WTC11 (cell line): ENCODE measurements at regions of chr12 and their contacts with region 1.

Region 1: DNA sequence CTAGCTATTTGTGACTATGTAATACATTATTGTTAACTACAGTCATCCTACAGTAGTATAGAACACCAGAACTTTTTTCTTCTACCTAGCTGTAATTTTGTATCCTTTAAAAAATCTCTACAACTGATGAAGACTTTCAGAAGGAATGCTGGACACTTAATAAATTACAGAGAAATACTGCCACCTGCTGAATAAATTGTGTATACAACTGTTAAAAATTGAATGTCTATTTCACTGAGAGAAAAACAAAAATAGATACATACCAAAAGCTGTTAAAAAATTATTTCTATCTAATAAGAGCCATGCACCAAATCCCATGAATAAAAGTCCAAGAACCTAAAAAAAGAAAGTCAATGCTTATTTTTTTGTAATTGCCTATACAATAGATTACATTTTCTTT is 6.6 kb downstream of the TSPAN19 start:
- DNase-seq: no peak
- ATAC-seq: no peak
- H3K4me3 Mint-ChIP-seq: no peak overlapping the region
- H3K27ac Mint-ChIP-seq: no peak overlapping the region
- H3K4me1 Mint-ChIP-seq: no peaks in the 10 kb centered on the region
- H3K27me3 Mint-ChIP-seq: no peaks in the 10 kb centered on the region
- CTCF ChIP-seq: peak; percentile 53; the same call in 1 of the 2 replicates

Region 2: GRCh38 chr12:84637926-84638325 is 391.5 kb before region 1 on chr12:
- CTCF ChIA-PET with region 1: no interaction called
- POLR2A ChIA-PET with region 1: no interaction called
- DNase-seq: no peak
- ATAC-seq: no peak
- H3K4me3 Mint-ChIP-seq: no peak overlapping the region
- H3K27ac Mint-ChIP-seq: no peak overlapping the region
- H3K4me1 Mint-ChIP-seq: peaks cover 5% of the 10 kb centered on the region
- H3K27me3 Mint-ChIP-seq: no peaks in the 10 kb centered on the region
- CTCF ChIP-seq: no peak

Region 3: GRCh38 chr12:84874125-84874824 is 155.2 kb before region 1 on chr12:
- CTCF ChIA-PET with region 1: interaction called, 55 read pairs
- POLR2A ChIA-PET with region 1: no interaction called
- DNase-seq: no peak
- ATAC-seq: peak; percentile 74
- H3K4me3 Mint-ChIP-seq: no peak overlapping the region
- H3K27ac Mint-ChIP-seq: no peak overlapping the region
- H3K4me1 Mint-ChIP-seq: no peaks in the 10 kb centered on the region
- H3K27me3 Mint-ChIP-seq: no peaks in the 10 kb centered on the region
- CTCF ChIP-seq: peak; percentile 68

Region 4: DNA sequence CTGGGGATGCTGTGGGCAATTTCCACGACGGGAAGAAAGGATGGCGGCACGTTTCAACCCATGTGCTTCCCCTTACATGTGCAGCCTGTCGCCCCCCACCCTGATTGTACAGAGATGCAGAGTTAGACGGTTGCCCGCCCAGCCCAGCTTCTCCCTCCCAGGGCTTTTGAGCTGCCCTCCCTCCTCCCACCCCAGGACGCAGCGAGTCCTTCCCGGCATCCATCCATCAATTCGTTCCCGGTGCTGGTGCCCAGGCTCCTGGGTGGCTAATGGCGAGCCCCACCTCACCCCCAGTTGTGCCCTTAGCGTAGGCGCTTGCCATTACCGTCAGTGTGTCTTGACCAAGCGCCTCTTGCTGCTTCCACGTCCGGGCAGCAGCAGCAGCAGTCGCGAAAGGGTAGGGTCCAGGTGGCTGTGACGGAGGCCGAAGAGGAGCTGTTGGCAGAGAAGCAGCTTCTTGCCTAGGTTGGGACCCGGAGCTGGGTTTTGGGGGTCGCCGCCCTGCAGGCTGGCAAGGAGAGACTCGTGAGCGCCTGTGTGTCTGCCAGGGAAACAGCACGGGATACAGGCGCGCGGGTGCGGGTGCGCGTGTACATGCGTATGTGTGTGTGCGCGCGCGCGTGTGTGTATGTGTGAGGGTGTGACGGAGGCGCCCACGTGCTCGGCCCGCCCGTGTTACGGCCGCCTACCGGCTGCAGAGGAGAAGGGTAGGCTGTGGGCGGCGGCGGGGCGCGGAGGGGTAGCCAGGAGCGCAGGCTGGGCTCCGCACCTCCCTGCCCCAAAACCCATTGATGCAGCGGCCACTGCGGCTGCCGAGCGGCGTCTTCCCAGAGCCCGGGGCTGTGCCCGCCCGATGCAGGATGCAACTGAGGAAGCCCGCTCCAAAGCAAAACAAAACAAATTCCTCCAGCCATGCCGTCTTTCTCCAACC is 117.0 kb before region 1 on chr12 and contains the start of gene SLC6A15:
- CTCF ChIA-PET with region 1: interaction called, 30 read pairs
- POLR2A ChIA-PET with region 1: no interaction called
- DNase-seq: peak; percentile 87
- ATAC-seq: peak; percentile 83
- H3K4me3 Mint-ChIP-seq: peak within 1 kb of the TSS; percentile 93
- H3K27ac Mint-ChIP-seq: peak within 1 kb of the TSS; percentile 97
- H3K4me1 Mint-ChIP-seq: peaks cover 16% of the 10 kb centered on the region
- H3K27me3 Mint-ChIP-seq: peaks cover 8% of the 10 kb centered on the region
- CTCF ChIP-seq: peak; percentile 50; the same call in 1 of the 2 replicates
- total RNA-seq, gene SLC6A15: 27.0 to 30.7 TPM (median 27.2 TPM) in 3 replicates

Region 5: DNA sequence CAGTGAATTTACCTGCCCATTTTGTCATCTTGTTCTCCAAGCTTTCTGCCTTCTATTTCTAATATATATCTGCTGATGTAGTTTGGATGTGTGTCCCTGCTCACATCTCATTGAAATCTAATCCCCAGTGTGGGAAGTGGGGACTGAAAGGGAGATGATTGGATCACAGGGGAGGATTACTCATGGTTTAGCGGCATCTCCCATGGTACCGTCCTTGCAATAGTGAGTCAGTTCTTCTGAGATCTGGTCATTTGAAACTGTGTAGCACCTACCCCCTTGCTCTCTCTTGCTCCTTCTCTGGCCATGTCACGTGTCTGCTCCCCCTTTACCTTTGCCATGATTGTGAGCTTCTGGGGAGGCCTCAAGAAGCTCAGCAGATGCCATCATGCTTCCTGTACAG is 224.4 kb after region 1 on chr12:
- CTCF ChIA-PET with region 1: no interaction called
- POLR2A ChIA-PET with region 1: no interaction called
- DNase-seq: no peak
- ATAC-seq: peak; percentile 30; the same call in 1 of the 2 replicates
- H3K4me3 Mint-ChIP-seq: no peak overlapping the region
- H3K27ac Mint-ChIP-seq: no peak overlapping the region
- H3K4me1 Mint-ChIP-seq: no peaks in the 10 kb centered on the region
- H3K27me3 Mint-ChIP-seq: no peaks in the 10 kb centered on the region
- CTCF ChIP-seq: no peak